ENCODE measurements at regions of chr1 and their contacts with region 1.

Region 1: DNA sequence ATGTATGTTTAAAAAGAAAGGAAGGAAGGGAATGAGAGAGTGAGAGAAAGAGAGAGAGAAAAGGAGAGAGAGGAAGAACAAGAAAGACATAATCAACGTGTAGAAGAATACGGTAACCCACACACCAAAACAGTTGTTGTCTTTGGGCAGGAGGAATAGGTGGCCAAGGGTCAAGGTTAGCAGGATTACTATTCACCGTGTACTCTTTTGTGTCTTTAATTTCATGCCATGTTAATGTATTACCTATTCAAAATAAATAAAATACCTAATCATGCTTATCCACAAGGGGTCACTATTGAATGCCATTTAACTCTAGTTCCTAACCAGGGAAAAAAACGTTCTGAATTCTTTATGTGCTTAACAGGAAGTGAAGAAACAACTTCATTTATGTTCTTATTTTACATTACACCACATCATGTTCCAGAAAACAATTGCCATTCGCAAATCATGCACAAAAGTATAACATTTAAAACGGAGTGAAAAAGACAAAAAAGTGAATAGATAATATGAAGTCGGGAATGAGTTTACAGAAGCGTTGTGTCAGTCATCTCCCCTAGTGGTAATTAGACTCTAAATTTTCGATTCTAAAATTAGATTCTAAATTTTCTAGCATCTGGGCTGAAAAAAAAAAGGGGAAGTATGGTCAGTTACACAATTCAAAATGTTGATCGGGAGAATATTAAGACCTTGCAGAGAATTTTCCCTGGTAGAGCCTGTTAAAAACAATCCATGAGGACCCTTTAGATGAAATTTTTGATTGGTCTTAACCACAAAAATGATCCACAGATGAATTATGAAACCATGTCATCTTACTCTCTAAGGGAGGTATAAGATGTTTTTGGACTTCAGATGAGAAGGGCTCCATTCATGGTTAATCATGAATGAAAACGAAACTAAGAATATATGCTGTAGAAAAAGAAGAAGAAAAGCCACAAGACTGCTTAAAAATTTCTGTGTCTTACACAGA is 700 bp upstream of the KMO start:
- DNase-seq: peak in 1 of 2 experiments; percentile 78
- H3K4me3 ChIP-seq: peak overlapping the region; percentile 28
- H3K4me1 ChIP-seq: peaks cover 4% of the 10 kb centered on the region; the same call in 1 of the 2 replicates
- H3K27me3 ChIP-seq: peaks cover 2% of the 10 kb centered on the region; the same call in 1 of the 2 replicates

Region 2: DNA sequence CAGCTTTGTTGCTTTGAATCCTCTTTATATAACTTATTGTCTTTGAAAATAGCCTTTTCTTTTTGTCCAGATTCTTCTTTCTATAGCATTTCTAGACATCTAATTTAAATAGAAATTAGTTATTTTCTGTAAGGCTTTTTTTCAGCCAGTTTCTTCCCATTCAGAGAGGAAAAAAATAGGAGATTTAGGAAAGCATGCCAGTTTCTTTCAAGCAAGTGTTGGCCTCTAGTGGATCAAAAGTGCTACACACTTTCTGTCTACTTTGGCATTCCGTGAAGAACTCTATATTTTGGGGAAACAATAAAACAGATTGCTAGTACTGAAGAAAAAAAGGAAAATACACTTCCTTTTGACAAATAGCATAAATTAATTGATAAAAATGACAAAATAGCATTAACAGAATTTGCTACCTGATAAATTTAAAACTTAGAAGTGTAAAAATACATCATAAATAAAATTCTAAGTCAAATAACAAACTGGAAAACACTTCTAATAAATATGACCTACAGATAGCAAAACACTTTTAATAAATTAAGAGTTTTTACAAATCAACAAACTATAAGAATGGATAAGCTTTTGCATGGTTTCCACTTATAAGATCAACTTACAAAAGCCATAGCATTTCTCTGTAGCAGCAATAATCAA is 303.4 kb after region 1 on chr1:
- in situ Hi-C with region 1: no loop called
- DNase-seq: peak in 1 of 2 experiments; percentile 56
- H3K4me3 ChIP-seq: no peak overlapping the region
- H3K4me1 ChIP-seq: no peaks in the 10 kb centered on the region
- H3K27me3 ChIP-seq: peaks cover 6% of the 10 kb centered on the region

Region 3: DNA sequence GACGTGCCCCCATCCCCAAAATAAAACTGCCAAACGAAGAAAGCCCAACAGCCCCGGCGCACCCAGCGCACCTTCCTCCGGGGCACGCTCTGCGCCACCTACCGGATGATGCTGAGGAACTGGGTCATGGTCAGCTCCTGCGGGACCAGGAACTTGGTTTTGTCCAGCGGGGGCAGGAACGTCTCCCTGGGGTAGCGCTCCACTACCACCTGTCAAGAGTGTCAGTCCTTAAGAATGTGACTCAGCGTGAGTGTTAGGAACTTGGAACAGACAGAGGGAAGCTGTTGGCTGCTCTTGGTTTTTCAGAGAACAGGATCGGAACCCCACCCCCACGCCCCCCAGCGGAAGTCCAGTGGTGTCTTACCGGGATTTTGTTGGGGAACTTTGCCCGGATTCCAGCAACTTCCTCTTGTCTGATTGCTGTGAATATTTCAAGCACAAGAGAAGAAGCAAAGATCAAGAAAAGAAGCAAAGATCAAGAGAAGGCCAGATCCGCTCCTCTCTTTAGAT is 467.0 kb after region 1 on chr1:
- in situ Hi-C with region 1: loop called (anchors 25 kb)
- DNase-seq: peak; percentile 53 to 85
- H3K4me3 ChIP-seq: peak overlapping the region; percentile 6; the same call in 1 of the 2 replicates
- H3K4me1 ChIP-seq: peaks cover 4% of the 10 kb centered on the region
- H3K27me3 ChIP-seq: no peaks in the 10 kb centered on the region

Region 4: DNA sequence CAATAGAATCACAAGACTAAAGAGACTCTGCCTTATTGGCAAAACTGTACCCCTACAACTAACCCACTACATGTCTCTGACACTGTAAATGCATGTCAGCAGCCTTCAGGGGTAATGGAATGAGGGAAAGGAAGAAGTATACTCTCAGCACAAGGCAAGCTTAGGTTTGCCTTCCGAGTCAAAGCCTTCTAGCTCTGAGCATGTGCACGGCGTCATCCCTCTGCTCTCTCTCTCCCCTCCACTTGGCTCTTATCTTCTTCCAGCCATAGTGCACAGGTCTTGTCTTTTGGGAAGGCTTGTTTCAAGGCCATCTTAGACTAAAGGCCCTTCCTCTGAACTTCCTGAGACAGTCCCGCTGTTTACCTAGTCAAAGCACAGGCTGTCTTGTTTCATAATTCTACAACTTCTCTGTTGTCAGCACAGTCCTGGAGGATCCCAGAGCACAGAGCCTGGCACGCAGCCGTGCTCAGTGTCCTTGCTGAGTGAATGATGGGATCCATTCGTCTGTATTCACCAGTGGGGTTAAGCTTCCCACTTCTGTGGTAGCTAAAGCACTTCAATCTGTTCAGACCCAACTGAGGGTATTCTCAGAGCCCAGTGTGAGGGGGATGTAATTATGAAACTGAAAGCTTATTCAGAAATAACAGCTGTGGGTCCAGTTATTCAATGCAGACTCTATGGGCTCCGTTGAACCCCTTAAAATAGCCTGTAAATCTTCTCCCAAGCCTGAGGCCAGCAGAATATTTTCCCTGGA is 1159.5 kb after region 1 on chr1:
- in situ Hi-C with region 1: no loop called
- DNase-seq: no peak
- H3K4me3 ChIP-seq: no peak overlapping the region
- H3K4me1 ChIP-seq: no peaks in the 10 kb centered on the region
- H3K27me3 ChIP-seq: no peaks in the 10 kb centered on the region